HCT116 (cell line): ENCODE measurements at regions of chr9 and their contacts with region 1.

Region 1: GRCh38 chr9:129495534-129496325 is 125.2 kb downstream of the C9orf50 start:
- DNase-seq: peak; percentile 82
- ATAC-seq: peak; percentile 71
- H3K4me3 ChIP-seq: peak overlapping the region; percentile 62 to 67
- H3K27ac ChIP-seq: peak overlapping the region; percentile 100
- H3K4me1 ChIP-seq: peaks cover 74 to 100% of the 10 kb centered on the region in 2 experiments
- H3K27me3 ChIP-seq: no peaks in the 10 kb centered on the region
- CTCF ChIP-seq: no peak
- POLR2A ChIP-seq: no peak
- RAD21 ChIP-seq: no peak

Region 2: DNA sequence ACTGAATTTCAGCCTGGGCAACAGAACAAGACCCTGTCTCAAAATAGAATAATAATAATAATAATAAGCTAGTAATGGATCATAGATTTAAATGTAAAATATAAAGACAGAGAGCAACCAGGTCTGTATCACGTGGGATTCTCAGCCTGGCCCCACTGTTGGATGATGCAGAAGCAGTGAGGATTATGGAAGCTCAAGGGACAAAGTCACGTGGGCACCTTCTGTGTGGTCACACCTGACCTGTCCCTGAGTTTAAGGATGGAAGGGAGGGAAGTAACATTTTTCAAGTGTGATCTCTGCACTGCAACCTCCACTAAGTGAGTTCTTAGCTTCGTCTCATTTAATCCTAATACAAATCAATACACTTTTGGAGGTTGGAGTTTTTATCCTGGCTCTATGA is 105.2 kb before region 1 on chr9:
- CTCF ChIA-PET with region 1: no interaction called
- POLR2A ChIA-PET with region 1: interaction called, 10 read pairs
- RAD21 ChIA-PET with region 1: no interaction called
- intact Hi-C with region 1: no loop called
- DNase-seq: no peak
- ATAC-seq: no peak
- H3K4me3 ChIP-seq: no peak overlapping the region
- H3K27ac ChIP-seq: no peak overlapping the region
- H3K4me1 ChIP-seq: peaks cover 15 to 26% of the 10 kb centered on the region in 2 experiments
- H3K27me3 ChIP-seq: no peaks in the 10 kb centered on the region
- CTCF ChIP-seq: no peak
- POLR2A ChIP-seq: no peak
- RAD21 ChIP-seq: no peak

Region 3: GRCh38 chr9:129482521-129483414 is 13.0 kb before region 1 on chr9:
- CTCF ChIA-PET with region 1: no interaction called
- POLR2A ChIA-PET with region 1: interaction called, 30 read pairs
- RAD21 ChIA-PET with region 1: interaction called, 4 to 5 read pairs
- intact Hi-C with region 1: no loop called
- DNase-seq: no peak
- ATAC-seq: peak; percentile 69
- H3K4me3 ChIP-seq: peak overlapping the region; percentile 44 to 56
- H3K27ac ChIP-seq: peak overlapping the region; percentile 100
- H3K4me1 ChIP-seq: peaks cover 92 to 99% of the 10 kb centered on the region in 2 experiments
- H3K27me3 ChIP-seq: no peaks in the 10 kb centered on the region
- CTCF ChIP-seq: no peak
- POLR2A ChIP-seq: no peak
- RAD21 ChIP-seq: no peak

Region 4: GRCh38 chr9:129506892-129507291 is 11.2 kb after region 1 on chr9:
- CTCF ChIA-PET with region 1: no interaction called
- POLR2A ChIA-PET with region 1: interaction called, 20 read pairs
- RAD21 ChIA-PET with region 1: interaction called, 3 read pairs
- intact Hi-C with region 1: no loop called
- DNase-seq: no peak
- ATAC-seq: peak; percentile 71
- H3K4me3 ChIP-seq: no peak overlapping the region
- H3K27ac ChIP-seq: peak overlapping the region; percentile 100
- H3K4me1 ChIP-seq: peaks cover 50 to 74% of the 10 kb centered on the region in 2 experiments
- H3K27me3 ChIP-seq: no peaks in the 10 kb centered on the region
- CTCF ChIP-seq: no peak
- POLR2A ChIP-seq: no peak
- RAD21 ChIP-seq: no peak

Region 5: DNA sequence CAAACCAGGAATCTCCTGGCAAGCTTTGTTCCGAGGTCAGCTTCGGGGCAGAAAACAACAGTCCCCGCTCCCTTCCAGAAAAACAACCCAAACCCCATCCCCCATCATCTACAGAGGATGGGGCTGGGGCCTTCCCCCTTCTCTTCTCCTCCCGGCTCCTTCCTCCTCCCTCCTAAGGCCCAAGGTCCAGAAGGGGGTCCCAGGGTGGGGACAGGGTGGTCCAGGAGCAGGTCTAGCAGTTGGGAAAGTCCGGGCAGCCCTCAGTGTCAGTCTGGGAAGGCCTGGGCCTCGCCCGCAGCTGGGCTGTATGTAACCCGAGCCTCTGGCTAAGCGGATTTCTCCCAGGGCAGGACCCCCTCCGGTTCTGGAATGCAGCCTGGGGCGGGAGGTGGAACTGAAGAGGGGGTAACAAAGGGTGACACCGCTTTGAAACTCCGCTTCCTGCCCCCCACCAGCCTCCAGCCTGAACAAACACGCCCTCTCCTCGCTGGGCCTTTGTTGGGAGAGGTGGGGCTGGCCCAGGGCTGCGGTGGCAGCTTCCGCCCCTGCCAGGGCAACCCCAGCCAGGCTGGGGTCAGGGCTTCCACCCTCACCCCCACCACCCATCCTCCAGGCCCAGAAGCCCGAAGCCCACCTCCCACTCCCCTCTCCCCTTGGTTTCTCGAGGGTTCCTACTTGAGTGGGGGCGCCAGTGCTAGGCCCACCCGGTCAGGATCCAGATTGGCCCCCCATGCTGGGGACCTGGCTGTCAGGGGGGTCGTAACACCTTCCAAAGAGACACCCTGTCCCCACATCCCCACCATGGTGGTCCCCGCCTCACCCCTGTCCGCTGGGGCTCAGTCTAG is 61.7 kb after region 1 on chr9:
- CTCF ChIA-PET with region 1: no interaction called
- POLR2A ChIA-PET with region 1: interaction called, 13 read pairs
- RAD21 ChIA-PET with region 1: interaction called in 1 of 2 experiments, 3 read pairs
- intact Hi-C with region 1: no loop called
- DNase-seq: peak; percentile 89
- ATAC-seq: peak; percentile 79
- H3K4me3 ChIP-seq: peak overlapping the region; percentile 33 to 45
- H3K27ac ChIP-seq: peak overlapping the region; percentile 97
- H3K4me1 ChIP-seq: peaks cover 90 to 99% of the 10 kb centered on the region in 2 experiments
- H3K27me3 ChIP-seq: no peaks in the 10 kb centered on the region
- CTCF ChIP-seq: no peak
- POLR2A ChIP-seq: peak; percentile 57
- RAD21 ChIP-seq: no peak

Region 6: DNA sequence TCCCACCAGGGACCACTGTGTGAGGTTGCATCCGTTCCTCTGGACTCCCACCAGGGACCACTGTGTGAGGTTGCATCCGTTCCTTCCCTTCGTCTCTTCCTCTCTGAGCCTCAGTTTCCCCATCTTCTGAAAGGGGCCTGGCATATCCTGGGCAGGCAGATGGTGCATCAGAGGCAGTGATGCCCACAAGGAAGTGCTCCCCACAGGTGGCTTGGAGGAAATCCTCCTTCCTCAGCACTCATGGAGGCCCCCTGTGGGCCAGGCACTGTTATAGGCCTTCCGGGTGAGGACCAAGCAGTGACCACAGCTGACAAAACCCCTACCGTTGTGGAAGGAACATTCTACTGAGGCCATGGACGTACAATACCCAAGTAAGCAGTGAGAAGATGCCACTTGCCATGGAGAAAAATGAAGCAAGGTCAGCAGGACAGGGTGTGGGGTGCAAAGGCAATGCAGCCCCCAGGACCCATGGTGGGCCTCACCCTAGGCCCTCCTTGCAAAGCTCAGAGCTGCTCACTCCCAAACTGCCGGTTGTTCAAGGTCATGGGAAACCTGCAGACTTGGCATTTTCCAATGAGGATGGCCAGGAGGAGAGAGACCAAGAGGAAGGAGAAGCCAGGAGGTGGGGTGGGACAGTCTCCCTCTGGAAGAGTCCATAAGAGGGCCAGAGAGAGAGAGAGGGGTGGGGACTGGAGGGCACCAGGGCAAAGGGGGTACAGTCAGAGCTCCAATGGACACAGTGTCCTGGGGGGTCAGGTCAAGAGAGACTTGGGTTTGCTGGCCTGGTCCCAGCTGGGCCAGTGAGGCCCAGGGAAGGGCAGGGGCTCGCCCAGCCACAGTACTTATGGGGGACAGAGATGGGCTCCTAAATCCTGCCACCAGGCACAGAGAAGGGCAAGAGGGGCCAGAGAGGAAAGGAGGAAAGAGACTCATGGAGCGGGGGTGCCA is 74.0 kb after region 1 on chr9:
- CTCF ChIA-PET with region 1: interaction called, 4 read pairs
- POLR2A ChIA-PET with region 1: interaction called, 9 read pairs
- RAD21 ChIA-PET with region 1: interaction called in 1 of 2 experiments, 3 read pairs
- intact Hi-C with region 1: loop called (anchors 5 kb)
- DNase-seq: peak; percentile 81
- ATAC-seq: peak; percentile 45
- H3K4me3 ChIP-seq: peak overlapping the region; percentile 34 to 72
- H3K27ac ChIP-seq: peak overlapping the region; percentile 100
- H3K4me1 ChIP-seq: peaks cover 50 to 68% of the 10 kb centered on the region in 2 experiments
- H3K27me3 ChIP-seq: no peaks in the 10 kb centered on the region
- CTCF ChIP-seq: peak in 2 of 3 experiments; percentile 66 to 80; a peak in 4 of 6 replicates
- POLR2A ChIP-seq: peak; percentile 24
- RAD21 ChIP-seq: no peak

Region 7: GRCh38 chr9:129584136-129584535 is 88.4 kb after region 1 on chr9:
- CTCF ChIA-PET with region 1: no interaction called
- POLR2A ChIA-PET with region 1: interaction called, 13 read pairs
- RAD21 ChIA-PET with region 1: interaction called in 1 of 2 experiments, 8 read pairs
- intact Hi-C with region 1: no loop called
- DNase-seq: peak; percentile 85
- ATAC-seq: peak; percentile 68
- H3K4me3 ChIP-seq: no peak overlapping the region
- H3K27ac ChIP-seq: peak overlapping the region; percentile 51
- H3K4me1 ChIP-seq: peaks cover 33 to 47% of the 10 kb centered on the region in 2 experiments
- H3K27me3 ChIP-seq: no peaks in the 10 kb centered on the region
- CTCF ChIP-seq: no peak
- POLR2A ChIP-seq: no peak
- RAD21 ChIP-seq: no peak